Activated CD4-positive, alpha-beta memory T cell treated with anti-CD3 and anti-CD28 coated beads, Interleukin-2, amount 10 ng/mL, durations not matched to agents 7 days and 5 days (primary cell): ENCODE measurements at regions of chr12 and their contacts with region 1.

Region 1: DNA sequence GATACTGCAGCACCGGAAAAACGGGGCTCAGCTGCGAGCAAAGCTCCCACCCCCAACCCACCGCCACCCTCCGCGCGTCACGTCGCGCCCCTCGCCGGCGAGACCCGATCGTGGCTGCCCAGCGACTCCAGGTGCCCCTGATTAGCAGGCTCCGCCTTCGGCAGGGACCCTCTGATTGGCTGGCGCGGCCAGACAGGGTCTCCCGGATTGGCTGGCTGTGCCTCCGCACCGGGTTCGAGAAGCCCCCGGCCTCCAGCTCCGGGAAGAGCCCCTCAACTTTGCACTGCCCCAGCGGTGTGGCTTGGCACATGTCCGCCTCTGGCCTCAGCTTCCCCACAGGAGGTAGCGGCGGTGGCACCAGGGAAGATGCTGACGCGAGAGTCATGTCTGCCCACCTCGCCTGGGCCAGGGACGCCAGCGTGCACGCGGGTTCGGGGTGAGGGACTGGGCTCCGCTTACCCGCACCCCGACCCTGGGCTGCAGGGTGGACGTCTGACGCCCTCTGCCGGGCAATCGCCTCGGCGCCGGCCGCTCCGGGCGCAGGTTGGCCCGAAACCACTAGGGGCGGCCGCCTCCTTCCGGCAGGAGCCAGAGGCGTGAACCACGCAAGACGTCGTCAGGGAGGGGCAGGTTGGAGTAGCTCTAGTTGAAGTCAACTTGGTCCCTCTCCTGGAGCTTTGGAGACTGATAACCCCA is 498 bp upstream of the RHOF start:
- DNase-seq: peak; percentile 97
- H3K4me3 Mint-ChIP-seq: peak overlapping the region; percentile 92
- H3K27ac Mint-ChIP-seq: peak overlapping the region; percentile 90
- H3K4me1 Mint-ChIP-seq: peaks cover 60% of the 10 kb centered on the region
- H3K27me3 Mint-ChIP-seq: no peaks in the 10 kb centered on the region

Region 2: GRCh38 chr12:121668750-121669520 is 125.1 kb before region 1 on chr12:
- CTCF ChIA-PET with region 1: interaction called, 14 read pairs
- POLR2A ChIA-PET with region 1: interaction called, 6 read pairs
- DNase-seq: peak; percentile 57
- H3K4me3 Mint-ChIP-seq: no peak overlapping the region
- H3K27ac Mint-ChIP-seq: no peak overlapping the region
- H3K4me1 Mint-ChIP-seq: peaks cover 65% of the 10 kb centered on the region
- H3K27me3 Mint-ChIP-seq: no peaks in the 10 kb centered on the region

Region 3: DNA sequence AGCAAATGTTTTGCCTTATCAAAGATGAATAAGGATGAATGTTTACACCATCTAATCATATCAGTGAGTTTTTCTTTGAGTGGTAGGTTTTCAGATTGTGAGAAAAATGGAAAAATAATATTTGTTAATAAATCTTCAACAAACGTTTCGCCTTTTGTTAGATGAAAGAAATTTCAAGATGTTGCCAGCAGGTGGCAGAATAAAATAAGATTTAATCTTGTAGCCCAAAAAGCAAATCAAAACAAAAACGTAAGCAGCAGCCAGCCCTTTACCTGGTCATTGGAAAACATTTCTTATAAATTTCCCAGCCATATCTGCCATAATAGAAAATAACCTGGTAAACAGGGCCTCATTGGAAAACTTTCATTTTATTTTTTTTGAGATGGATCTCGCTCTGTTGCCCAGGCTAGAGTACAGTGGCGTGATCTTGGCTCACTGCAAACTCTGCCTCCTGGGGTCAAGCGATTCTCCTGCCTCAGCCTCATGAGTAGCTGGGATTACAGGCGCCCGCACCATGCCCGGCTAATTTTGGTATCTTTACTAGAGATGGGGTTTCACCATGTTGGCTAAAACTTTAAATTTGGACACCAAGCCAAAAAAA is 96.8 kb before region 1 on chr12:
- CTCF ChIA-PET with region 1: interaction called, 37 read pairs
- POLR2A ChIA-PET with region 1: interaction called, 4 read pairs
- DNase-seq: no peak
- H3K4me3 Mint-ChIP-seq: no peak overlapping the region
- H3K27ac Mint-ChIP-seq: no peak overlapping the region
- H3K4me1 Mint-ChIP-seq: peaks cover 2% of the 10 kb centered on the region
- H3K27me3 Mint-ChIP-seq: no peaks in the 10 kb centered on the region

Region 4: DNA sequence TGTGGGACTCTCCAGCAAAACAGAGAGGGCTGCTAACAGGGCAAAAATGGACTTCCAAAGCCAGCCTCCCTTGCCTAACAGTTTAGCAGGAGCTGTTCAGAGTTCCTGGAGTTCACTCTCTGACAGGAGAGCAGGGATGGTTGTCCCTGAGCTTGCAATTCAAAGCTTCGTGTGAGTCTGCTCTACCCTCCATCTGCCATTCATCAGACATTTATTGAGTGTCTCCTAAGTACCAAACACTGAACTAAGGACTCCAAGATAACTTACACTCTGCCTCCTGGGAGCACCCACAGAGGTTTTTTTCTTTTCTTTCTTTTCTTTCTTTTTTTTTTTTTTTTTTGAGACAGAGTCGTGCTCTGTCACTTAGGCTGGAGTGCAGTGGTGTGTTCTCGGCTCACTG is 29.2 kb before region 1 on chr12:
- CTCF ChIA-PET with region 1: interaction called, 10 read pairs
- POLR2A ChIA-PET with region 1: interaction called, 3 read pairs
- DNase-seq: no peak
- H3K4me3 Mint-ChIP-seq: no peak overlapping the region
- H3K27ac Mint-ChIP-seq: no peak overlapping the region
- H3K4me1 Mint-ChIP-seq: no peaks in the 10 kb centered on the region
- H3K27me3 Mint-ChIP-seq: no peaks in the 10 kb centered on the region

Region 5: DNA sequence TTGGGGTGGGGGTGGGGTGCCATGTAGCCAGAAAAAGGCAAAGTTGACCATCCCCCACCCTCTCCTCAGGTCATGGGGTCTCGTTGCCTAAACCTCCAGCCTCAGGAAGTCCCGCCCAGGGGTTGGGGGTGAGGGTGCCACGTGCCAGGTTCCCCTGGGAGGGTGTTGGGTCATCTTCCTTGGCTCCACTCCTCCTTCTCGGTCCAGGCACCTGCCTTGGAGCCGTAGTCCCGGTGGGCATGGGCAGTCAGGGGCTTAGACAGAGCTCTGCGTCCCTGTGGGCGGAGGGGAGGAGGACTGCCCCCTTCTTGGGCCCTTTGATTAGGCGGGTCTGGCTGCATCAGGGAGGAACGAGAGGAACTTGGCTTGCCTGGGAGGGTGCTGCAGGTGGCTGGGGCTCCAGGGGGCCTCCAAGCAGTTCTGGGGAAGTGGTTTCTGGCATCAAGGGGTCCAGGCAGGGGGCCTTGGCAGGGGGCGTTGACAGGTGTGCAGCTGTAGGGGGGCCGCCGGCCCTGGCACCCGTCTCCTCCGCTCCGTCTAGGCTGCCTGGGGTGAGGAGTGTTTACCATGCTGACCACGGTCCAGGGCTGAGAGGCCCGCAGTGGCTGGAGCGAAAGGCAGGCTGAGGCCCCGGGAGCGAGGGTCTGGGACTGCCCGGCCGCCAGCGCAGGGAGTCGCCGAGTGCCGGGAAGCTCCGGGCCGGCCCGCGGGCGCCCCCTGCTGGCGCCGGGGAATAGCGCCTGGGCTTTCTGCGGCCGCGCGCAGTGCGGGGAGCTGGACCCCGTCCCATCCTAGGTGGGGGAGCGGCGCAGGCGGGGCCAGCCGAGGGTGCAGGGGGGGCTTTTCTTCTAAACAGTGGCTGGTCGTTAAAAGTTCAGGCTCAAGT is 17.7 kb after region 1 on chr12:
- CTCF ChIA-PET with region 1: interaction called, 683 read pairs
- POLR2A ChIA-PET with region 1: interaction called, 1,170 read pairs
- DNase-seq: peak; percentile 73
- H3K4me3 Mint-ChIP-seq: peak overlapping the region; percentile 81
- H3K27ac Mint-ChIP-seq: peak overlapping the region; percentile 61
- H3K4me1 Mint-ChIP-seq: peaks cover 57% of the 10 kb centered on the region
- H3K27me3 Mint-ChIP-seq: no peaks in the 10 kb centered on the region

Region 6: DNA sequence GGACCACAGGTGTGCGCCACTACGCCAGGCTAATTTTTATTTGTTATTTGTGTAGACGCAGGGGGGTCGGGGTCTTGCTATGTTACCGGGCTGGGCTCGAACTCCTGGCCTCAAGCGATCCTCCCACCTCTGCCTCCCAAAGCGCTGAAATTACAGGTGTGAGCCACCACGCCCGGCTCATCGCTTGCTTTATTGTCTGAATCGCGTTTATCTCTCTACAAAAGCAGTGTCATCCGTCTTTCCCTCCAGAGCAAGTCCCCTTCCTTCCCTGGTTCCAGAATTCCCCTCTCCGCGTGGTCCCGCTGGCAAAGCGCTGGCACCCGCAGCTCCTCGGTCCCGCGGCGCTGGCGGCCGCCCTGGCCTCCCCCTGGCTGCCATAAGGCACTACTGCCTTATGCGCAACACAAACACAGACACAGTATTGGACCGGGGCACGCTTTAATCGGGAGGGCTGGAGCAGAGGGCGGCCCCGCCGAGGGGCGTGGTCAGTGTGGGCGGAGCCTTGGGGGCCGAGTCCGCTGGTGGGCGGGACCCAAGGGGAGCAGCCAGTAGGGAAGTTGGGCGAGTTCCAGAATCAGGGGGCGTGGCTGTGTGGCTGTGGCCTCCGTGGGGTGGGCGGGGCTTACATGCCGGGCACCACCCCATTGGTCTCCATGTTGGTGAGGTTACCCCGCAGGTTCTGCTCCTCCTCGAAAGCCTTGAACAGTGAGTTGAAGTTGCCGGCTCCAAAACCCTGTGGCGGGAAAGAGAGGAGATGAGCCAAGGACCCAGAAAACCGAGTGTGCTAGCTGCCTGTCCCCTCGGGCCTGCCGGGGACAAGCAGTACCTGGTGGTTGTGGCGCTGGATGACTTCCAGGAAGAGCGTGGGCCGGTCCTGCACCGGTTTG is 45.4 kb after region 1 on chr12:
- CTCF ChIA-PET with region 1: interaction called, 11 read pairs
- POLR2A ChIA-PET with region 1: interaction called, 4 read pairs
- DNase-seq: peak; percentile 99
- H3K4me3 Mint-ChIP-seq: peak overlapping the region; percentile 97
- H3K27ac Mint-ChIP-seq: peak overlapping the region; percentile 84
- H3K4me1 Mint-ChIP-seq: peaks cover 22% of the 10 kb centered on the region
- H3K27me3 Mint-ChIP-seq: no peaks in the 10 kb centered on the region

Region 7: DNA sequence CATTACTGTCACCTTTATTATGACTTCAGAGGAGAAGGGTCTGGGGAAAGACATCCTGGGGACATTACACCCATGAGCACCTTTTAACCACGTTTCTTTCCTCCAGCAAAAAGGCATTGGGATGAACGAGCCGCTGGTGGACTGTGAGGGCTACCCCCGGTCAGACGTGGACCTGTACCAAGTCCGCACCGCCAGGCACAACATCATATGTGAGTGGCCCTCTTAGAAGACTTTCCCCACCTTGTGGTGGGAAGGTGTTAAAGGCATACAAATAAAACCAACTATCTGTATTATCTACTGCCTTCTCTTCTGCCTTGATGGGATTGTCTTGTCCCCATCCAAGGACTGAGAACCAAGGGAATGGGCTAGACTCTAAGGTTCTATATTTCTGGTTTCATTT is 100.6 kb after region 1 on chr12:
- CTCF ChIA-PET with region 1: interaction called, 83 read pairs
- POLR2A ChIA-PET with region 1: interaction called, 43 read pairs
- DNase-seq: no peak
- H3K4me3 Mint-ChIP-seq: no peak overlapping the region
- H3K27ac Mint-ChIP-seq: peak overlapping the region; percentile 74
- H3K4me1 Mint-ChIP-seq: peaks cover 39% of the 10 kb centered on the region
- H3K27me3 Mint-ChIP-seq: no peaks in the 10 kb centered on the region

Region 8: GRCh38 chr12:121964813-121965643 is 171.0 kb after region 1 on chr12:
- CTCF ChIA-PET with region 1: no interaction called
- POLR2A ChIA-PET with region 1: no interaction called
- DNase-seq: no peak
- H3K4me3 Mint-ChIP-seq: no peak overlapping the region
- H3K27ac Mint-ChIP-seq: no peak overlapping the region
- H3K4me1 Mint-ChIP-seq: no peaks in the 10 kb centered on the region
- H3K27me3 Mint-ChIP-seq: peaks cover 4% of the 10 kb centered on the region